HEK293 (cell line): ENCODE measurements at regions of chr3 and their contacts with region 1.

Region 1: DNA sequence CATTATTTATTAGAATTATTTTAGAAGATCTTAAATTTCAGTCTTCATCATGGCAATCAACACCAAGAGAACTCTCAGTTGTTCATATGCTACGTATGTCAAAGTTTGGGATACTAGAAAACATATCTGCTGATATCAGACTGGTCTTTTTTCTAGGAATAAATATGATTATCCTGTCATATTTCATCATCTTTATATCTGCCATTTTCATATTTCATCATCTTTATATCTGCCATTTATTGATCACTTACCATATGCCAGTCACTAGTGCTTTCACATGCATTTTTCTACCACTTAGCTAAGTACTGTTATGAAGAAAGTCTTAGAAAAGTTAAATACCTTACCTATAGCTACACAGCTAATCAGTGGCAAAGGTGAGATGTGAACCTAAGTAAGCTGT is 2.8 kb upstream of the ZCWPW2 start:
- H3K4me3 ChIP-seq: no peak overlapping the region
- H3K27ac ChIP-seq: no peak overlapping the region
- H3K4me1 ChIP-seq: no peaks in the 10 kb centered on the region
- CTCF ChIP-seq: no peak

Region 2: DNA sequence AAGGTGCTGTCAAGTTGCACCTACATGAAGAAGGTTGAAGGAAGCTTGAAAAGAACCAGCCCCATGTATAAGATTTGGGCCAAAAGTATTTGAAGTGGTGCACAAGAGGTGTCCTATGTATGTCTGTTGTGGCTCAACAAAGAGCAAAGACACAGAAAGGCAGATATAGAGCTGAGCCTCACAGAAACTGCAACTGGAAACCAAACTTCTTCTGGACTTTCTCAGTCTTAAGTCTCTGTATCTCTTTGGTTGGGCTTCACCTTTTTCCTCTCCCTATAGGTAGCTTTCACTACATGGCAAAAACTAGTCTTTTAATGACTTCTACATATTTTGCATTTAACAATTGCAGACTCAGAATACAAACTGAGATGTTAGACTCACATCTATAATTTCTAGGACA is 113.0 kb before region 1 on chr3:
- CTCF ChIA-PET with region 1: no interaction called
- POLR2A ChIA-PET with region 1: no interaction called
- H3K4me3 ChIP-seq: no peak overlapping the region
- H3K27ac ChIP-seq: no peak overlapping the region
- H3K4me1 ChIP-seq: no peaks in the 10 kb centered on the region
- CTCF ChIP-seq: no peak

Region 3: GRCh38 chr3:28262001-28262400 is 83.7 kb before region 1 on chr3:
- CTCF ChIA-PET with region 1: no interaction called
- POLR2A ChIA-PET with region 1: no interaction called
- H3K4me3 ChIP-seq: no peak overlapping the region
- H3K27ac ChIP-seq: no peak overlapping the region
- H3K4me1 ChIP-seq: no peaks in the 10 kb centered on the region
- CTCF ChIP-seq: no peak

Region 4: GRCh38 chr3:28334552-28334951 is 11.1 kb before region 1 on chr3:
- CTCF ChIA-PET with region 1: interaction called, 11 read pairs
- POLR2A ChIA-PET with region 1: no interaction called
- H3K4me3 ChIP-seq: no peak overlapping the region
- H3K27ac ChIP-seq: no peak overlapping the region
- H3K4me1 ChIP-seq: no peaks in the 10 kb centered on the region
- CTCF ChIP-seq: no peak